Adrenal gland (tissue), 19 donors: ENCODE measurements at regions of chr1 and their contacts with region 1.

Region 1: DNA sequence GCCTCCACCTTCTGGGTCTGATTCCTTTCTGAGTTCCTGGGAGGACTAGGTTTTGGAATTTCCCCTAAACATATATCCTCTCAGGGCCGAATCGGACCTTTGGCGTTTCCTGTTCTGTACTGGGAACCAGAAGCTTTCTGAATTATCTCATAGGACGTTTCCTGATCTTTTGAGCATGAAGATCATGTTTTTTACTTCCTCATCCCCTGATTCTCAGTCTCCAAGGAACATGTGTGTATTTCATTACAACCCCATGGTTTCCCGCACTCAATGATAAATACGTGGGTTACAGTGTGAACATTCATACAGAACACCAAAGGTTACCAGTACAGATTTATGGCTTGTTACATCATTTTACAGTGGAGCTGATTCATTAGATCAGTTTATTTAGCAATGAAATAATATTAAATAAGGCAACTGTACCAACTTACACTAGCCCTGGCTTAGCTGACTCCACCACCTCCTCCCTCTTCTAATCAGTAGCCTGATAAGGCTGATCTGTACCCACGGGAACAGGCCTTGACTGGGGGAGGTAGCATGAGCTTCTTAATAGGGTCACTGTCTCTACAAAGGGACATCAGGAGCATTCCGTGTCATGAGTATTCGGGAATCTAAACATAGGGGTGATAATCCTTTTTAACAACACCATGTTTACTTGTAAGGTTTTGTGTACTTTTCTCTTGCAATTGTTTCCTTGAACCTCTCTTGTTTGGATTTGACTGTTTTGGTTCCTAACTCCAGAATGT is 57.8 kb upstream of the ERRFI1 start:
- DNase-seq: peak in 2 of 7 donors; percentile 23 to 39
- H3K4me3 ChIP-seq: no peak overlapping the region
- H3K27ac ChIP-seq: peak overlapping the region in 3 of 5 donors; percentile 6 to 61 (median 19)
- H3K4me1 ChIP-seq: peaks cover 3 to 17% of the 10 kb centered on the region in 2 donors
- H3K27me3 ChIP-seq: no peaks in the 10 kb centered on the region
- CTCF ChIP-seq: no peak
- POLR2A ChIP-seq: no peak

Region 2: DNA sequence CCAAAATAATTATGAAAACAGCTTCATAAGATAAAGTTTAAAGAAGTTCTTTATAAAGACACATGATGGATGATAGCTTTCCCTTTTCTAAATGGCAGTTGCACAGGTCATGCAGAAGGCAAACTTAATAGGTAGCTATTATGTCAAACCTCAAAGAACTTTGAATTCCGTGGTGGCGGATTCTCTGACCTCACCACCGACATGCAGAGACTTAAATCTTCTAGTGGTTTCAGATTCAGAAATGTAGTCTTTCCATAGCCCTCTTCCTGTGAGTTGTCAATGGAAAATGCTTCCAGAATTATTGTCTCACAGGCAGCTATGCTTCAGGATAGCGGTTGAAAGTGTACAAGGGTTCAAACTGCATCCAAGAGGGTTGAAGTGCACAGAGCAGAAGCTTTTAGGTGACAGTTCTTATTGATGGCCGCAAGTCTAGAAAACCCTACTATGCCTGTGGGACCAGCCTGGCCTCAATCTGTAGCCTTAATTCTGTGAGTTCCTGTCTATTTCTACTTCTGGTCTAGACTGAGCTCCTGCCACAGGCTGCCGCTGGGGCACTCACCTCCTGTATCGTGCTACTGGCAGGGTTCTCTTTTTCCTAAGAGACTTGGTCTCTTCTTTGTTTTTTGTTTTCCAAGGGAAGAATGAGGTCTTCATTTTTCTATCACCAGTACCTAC is 59.2 kb after region 1 on chr1:
- intact Hi-C with region 1: loop called in 1 of 2 experiments (anchors 10 kb)
- DNase-seq: no peak
- H3K4me3 ChIP-seq: no peak overlapping the region
- H3K27ac ChIP-seq: no peak overlapping the region
- H3K4me1 ChIP-seq: peaks cover under 1 to 4% of the 10 kb centered on the region in 2 donors
- H3K27me3 ChIP-seq: no peaks in the 10 kb centered on the region
- CTCF ChIP-seq: no peak
- POLR2A ChIP-seq: no peak